ENCODE measurements at regions of chr2 and their contacts with region 1.

Region 1: DNA sequence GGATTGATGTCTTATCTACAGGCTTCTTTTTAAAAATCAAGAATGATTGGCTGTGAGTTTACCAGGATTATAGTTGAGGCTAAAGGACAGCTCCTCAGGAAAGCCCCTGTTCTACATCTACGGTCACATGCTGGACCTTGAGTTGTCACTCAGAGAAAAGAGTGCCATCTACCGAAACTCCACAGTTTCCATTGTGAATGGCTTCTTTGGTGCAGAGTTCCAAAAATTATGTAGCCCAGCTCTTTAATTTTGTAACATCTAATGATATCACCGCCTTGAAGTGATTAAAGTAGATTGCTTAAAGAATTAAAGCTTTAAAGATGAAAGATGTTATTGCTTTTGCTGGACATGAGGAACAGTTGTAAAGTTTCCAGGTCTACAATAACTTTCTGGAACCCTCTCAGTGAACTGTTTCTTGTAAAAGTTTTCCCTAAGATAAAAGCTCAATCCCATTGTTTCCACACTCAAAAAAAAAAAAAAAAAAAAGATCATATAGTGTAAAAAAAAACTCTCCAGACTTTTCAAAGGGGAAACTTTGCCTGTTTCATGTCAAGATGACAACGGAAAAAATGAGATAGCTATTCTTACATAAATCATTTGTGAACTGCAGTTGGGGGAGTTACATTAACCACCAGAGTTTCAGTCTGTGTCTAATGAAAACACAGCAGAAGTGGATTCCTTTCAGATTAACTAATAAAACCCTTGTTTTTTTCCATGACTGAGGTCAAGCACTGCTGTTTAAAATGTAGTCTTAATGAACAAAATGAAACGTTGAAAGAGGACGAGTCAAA is 4.3 kb downstream of the COL3A1 start:
- DNase-seq: peak; percentile 31
- ATAC-seq: peak; percentile 92
- H3K4me3 ChIP-seq: no peak overlapping the region; a peak in 1 of 4 replicates
- H3K27ac ChIP-seq: no peak overlapping the region
- H3K4me1 ChIP-seq: peaks cover 0 to 18% of the 10 kb centered on the region in 2 experiments; a peak in 2 of 4 replicates
- H3K27me3 ChIP-seq: no peaks in the 10 kb centered on the region
- CTCF ChIP-seq: peak; percentile 42 to 57 (median 46); a peak in 4 of 6 replicates
- POLR2A ChIP-seq: no peak
- RAD21 ChIP-seq: peak; percentile 78

Region 2: DNA sequence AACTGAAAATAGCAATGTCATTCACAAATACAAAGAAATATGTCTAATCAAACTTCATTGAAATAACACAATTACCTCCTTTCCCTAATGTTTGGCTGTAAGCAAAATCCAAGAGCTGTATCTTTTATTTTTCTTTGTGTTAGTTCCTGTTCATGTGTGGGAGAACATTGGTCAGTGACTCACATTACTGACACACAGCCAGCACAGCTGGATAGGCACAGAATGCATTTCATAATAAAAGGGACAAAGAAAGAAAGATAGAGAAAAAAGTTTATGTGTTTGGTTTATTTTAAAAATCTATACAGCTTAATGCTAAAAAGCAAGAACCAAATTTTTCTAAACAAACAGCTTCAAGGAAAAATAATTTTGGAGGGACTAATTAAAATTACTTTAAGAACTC is 189.9 kb before region 1 on chr2:
- CTCF ChIA-PET with region 1: interaction called, 3 read pairs
- POLR2A ChIA-PET with region 1: no interaction called
- RAD21 ChIA-PET with region 1: no interaction called
- intact Hi-C with region 1: loop called (anchors 5 kb)
- DNase-seq: peak; percentile 57
- ATAC-seq: peak; percentile 59
- H3K4me3 ChIP-seq: peak overlapping the region in 1 of 2 experiments; percentile 23; a peak in 1 of 4 replicates
- H3K27ac ChIP-seq: no peak overlapping the region
- H3K4me1 ChIP-seq: peaks cover 17 to 33% of the 10 kb centered on the region in 2 experiments
- H3K27me3 ChIP-seq: no peaks in the 10 kb centered on the region
- CTCF ChIP-seq: no peak
- POLR2A ChIP-seq: no peak
- RAD21 ChIP-seq: no peak